Dorsolateral prefrontal cortex (tissue), 120 donors: ENCODE measurements at regions of chr12 and their contacts with region 1.

Region 1: GRCh38 chr12:122137681-122138080 is 36.3 kb downstream of the IL31 start:
- DNase-seq: peak in 1 of 10 donors; percentile 30
- H3K4me3 ChIP-seq: no peak overlapping the region
- H3K27ac ChIP-seq: peak overlapping the region in 4 of 59 donors; percentile 14 to 68 (median 44)
- H3K27me3 ChIP-seq: no peaks in the 10 kb centered on the region
- CTCF ChIP-seq: no peak

Region 2: DNA sequence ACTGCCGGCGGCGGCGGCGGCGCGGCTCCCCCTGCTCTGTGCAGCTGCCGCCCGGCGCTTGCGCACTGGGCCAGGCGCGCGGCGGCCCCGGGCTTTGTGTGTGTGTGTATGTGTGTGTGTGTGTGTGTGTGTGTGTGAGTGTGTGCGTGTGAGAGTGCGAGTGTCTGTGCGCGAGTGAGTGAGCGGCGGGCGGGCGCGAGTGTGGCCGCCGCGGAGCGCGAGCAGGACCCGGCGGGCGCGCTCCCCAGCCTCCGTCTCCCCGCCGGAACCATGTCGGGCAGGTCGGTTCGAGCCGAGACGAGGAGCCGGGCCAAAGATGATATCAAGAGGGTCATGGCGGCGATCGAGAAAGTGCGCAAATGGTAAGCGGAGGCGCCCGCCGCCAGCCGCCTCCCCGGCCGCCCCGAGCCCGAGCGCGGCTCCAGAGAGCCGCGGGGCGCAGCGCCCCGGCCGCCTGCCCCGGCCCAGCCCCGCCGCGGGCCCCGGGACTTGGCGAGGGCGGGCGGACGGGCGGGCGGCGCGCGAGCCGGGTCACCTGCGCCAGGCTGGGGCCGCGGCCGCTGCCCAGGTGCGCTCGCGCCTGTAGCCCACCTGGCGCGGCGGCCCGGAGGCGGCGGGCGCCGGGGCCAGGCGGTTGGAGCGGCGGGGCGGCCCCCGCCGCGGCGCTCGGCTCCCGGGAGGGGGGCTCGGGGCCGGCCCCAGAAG is 115.7 kb before region 1 on chr12 and contains the start of gene BCL7A:
- intact Hi-C with region 1: no loop called
- DNase-seq: peak; percentile 66 to 84 (median 76)
- H3K4me3 ChIP-seq: peak within 1 kb of the TSS; percentile 67 to 91 (median 78)
- H3K27ac ChIP-seq: peak within 1 kb of the TSS; percentile 44 to 94 (median 87)
- H3K27me3 ChIP-seq: no peaks in the 10 kb centered on the region
- CTCF ChIP-seq: peak in 1 of 56 donors; percentile 12
- total RNA-seq, gene BCL7A: 25.2 to 50.3 (median 39.4) TPM

Region 3: GRCh38 chr12:122203301-122204166 is 65.9 kb after region 1 on chr12 and contains the start of gene B3GNT4:
- intact Hi-C with region 1: loop called in 1 of 2 experiments (anchors 10 kb)
- DNase-seq: peak in 9 of 10 donors; percentile 46 to 79 (median 67)
- H3K4me3 ChIP-seq: peak within 1 kb of the TSS; percentile 49 to 77 (median 64)
- H3K27ac ChIP-seq: peak within 1 kb of the TSS in 39 of 59 donors; percentile 2 to 81 (median 45)
- H3K27me3 ChIP-seq: peaks cover 0 to 34% (median 0%) of the 10 kb centered on the region in 45 donors
- CTCF ChIP-seq: no peak
- total RNA-seq, gene B3GNT4: 2.7 to 30.2 (median 10.5) TPM

Region 4: DNA sequence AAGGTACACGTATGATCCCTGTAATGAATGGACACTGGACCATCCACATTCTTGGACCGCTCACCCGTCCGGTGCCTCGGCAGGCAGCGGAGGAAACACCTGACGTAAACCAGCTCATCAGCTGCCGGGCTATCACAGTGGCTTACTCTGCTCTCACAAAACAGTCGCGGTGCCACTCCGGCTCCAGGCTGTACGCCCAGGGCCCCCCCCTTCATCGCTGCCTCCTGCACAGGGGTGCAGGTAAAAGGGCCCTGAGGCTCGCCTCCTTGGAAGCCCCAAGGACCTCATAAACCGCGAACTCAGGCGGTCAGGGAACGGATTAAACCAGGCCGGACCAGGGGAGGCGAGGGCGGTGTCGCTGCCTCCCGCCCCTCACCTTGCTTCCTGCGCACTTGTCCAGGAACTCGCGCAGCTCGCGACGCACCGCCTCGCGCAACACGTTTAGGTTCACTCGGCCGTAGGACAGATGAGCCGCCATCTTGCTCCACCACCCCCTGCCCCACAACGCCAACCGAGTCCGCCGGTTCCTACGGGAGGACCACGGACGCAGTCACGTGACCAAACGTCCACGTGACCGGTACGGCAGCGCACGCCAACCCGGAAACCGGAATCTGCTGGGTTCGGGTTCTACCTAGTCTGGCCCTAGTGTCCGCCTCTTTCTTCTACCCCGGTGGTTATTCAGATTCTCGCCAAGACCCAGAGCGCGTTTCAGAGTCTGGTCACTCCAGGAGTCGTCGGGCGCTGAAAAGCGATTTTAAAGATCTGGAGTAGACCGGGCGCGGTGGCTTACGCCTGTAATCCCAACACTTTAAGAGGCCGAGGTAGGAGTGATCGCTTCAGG is 128.5 kb after region 1 on chr12 and contains the start of gene VPS33A:
- intact Hi-C with region 1: loop called in 1 of 2 experiments (anchors 10 kb)
- DNase-seq: peak; percentile 94 to 98 (median 96)
- H3K4me3 ChIP-seq: peak within 1 kb of the TSS; percentile 66 to 100 (median 92)
- H3K27ac ChIP-seq: peak within 1 kb of the TSS; percentile 36 to 98 (median 91)
- H3K27me3 ChIP-seq: no peaks in the 10 kb centered on the region
- CTCF ChIP-seq: peak in 34 of 56 donors; percentile 6 to 56 (median 24)
- total RNA-seq, gene VPS33A: 17.9 to 38.0 (median 28.0) TPM